ENCODE measurements at regions of chr9 and their contacts with region 1.

Region 1: GRCh38 chr9:19493174-19493811 is 84.5 kb downstream of the ACER2 start:
- DNase-seq: peak; percentile 61
- H3K4me3 Mint-ChIP-seq: peak overlapping the region; percentile 48
- H3K27ac Mint-ChIP-seq: no peak overlapping the region
- H3K4me1 Mint-ChIP-seq: peaks cover 17% of the 10 kb centered on the region
- H3K27me3 Mint-ChIP-seq: no peaks in the 10 kb centered on the region

Region 2: DNA sequence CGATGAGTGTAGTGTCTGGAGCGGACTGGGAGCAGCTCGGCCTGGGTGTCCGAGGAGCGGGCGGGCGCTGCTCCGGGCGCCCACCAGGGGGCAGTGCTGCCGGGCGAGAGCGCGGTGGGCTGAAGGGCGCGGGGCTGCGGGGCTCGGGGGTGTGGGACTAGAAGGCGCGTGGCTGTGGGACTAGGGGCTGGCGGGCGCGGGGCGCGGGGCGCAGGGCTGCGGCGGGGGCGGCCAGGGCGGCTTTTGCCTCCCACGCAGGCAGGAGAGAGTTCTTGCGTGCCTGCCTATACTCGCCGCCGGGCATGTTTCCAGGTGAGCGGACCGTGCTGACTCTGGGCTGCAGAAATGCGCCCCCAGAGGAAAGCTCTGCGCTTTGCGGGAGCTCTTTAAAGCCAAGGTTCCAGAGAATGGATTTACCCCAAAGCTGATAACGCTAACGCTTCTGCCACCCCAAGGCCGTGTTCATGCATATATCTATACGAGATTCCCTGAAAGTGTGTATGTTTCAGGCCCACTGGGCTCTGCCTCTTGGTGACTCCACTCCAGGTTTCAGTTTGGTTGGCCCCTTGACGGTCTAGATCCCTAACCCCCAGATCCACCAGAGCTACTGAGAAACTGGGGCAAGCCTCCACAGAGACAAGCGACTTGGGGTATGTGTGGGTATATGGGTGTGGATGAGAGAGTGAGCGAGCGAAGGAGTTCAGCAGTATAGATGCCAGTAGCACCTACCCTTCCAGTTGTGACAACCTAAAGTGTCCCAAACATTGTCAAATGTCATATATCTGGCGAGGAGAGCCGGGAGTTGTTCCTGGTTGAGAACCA is 28.3 kb before region 1 on chr9:
- CTCF ChIA-PET with region 1: interaction called, 33 read pairs
- POLR2A ChIA-PET with region 1: no interaction called
- intact Hi-C with region 1: no loop called
- DNase-seq: peak; percentile 73
- H3K4me3 Mint-ChIP-seq: peak overlapping the region; percentile 72
- H3K27ac Mint-ChIP-seq: no peak overlapping the region
- H3K4me1 Mint-ChIP-seq: peaks cover 7% of the 10 kb centered on the region
- H3K27me3 Mint-ChIP-seq: no peaks in the 10 kb centered on the region

Region 3: DNA sequence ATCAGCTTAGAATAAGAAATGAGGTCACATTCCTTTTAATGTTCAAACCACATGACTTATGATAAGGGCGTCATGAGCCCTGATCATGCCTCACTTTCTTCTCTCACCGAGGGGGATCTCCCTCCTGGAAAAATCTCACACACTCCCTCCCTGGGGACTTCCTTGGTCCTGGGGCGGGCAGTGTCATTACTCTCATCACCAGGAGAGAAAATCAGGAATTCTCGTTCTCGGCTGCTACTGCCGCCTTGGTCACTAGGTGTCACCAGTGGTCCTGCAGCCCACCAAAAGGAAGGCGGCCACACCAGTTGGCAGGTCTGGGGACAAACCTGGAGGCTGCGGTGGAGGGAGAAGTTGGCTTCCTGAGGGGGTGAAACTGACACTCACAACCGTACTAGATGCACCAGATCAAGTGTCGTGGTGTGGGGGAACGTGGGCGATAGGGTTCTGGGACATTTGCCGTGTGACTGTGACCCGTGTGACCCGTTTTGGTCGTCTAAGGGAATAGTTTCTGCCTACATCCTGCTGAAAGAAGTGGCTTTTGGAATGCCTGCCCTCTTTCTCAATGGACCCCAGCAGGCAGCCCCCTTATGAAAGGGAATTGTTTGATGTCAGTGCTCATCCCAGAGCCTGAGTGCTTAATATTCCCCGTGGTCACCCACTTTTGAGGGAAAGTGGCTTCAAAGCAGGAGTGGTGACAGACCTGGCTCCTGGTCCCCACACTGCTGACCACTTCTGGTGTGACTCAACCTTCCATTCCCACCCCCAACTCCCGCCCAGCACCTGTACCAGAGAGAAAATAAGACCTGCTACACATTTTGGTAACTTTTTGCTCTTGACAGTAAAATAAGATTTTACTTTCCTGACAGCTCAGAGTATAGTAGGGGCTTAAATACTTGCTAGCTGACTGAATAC is 21.3 kb before region 1 on chr9:
- CTCF ChIA-PET with region 1: interaction called, 3 read pairs
- POLR2A ChIA-PET with region 1: no interaction called
- intact Hi-C with region 1: loop called (anchors 1 kb)
- DNase-seq: peak; percentile 80
- H3K4me3 Mint-ChIP-seq: peak overlapping the region; percentile 42
- H3K27ac Mint-ChIP-seq: no peak overlapping the region
- H3K4me1 Mint-ChIP-seq: peaks cover 16% of the 10 kb centered on the region
- H3K27me3 Mint-ChIP-seq: peaks cover 6% of the 10 kb centered on the region

Region 4: GRCh38 chr9:19517202-19517942 is 24.1 kb after region 1 on chr9:
- CTCF ChIA-PET with region 1: no interaction called
- POLR2A ChIA-PET with region 1: no interaction called
- intact Hi-C with region 1: loop called (anchors 2 kb)
- DNase-seq: peak; percentile 31
- H3K4me3 Mint-ChIP-seq: no peak overlapping the region
- H3K27ac Mint-ChIP-seq: no peak overlapping the region
- H3K4me1 Mint-ChIP-seq: peaks cover 24% of the 10 kb centered on the region
- H3K27me3 Mint-ChIP-seq: peaks cover 15% of the 10 kb centered on the region

Region 5: DNA sequence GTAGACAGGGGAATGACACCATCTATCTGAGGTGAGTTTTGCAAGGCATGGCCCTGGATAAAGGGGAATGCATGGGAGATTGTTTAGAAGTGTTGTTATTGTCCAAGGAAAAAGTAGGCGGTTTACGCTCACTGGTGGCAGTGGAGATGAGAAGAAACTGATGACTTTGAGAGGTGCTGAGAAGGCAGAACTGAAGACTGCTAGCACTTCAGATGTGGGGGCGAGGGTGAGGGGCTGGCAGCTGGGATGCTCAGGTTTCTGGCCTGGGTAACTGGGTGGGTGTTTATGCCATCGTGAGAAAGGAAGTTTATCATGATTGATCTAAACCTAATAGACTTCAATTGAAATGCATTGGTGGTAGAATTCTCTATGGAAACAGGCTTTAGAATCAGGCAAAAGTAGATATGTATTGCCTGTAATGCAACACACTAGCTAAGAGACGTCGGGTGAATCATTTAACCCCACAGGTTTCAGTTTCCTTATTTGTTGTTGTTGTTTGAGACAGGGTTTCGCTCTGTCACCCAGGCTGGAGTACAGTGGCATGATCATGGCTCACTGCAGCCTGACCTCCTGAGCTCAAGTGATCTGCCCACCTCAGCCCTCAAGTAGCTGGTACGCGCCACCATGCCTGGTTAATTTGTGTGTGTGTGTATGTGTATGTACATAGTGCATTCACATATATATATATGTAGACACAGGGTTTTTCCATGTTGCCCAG is 172.0 kb after region 1 on chr9:
- CTCF ChIA-PET with region 1: no interaction called
- POLR2A ChIA-PET with region 1: no interaction called
- intact Hi-C with region 1: loop called (anchors 10 kb)
- DNase-seq: peak; percentile 44
- H3K4me3 Mint-ChIP-seq: no peak overlapping the region
- H3K27ac Mint-ChIP-seq: no peak overlapping the region
- H3K4me1 Mint-ChIP-seq: peaks cover 7% of the 10 kb centered on the region
- H3K27me3 Mint-ChIP-seq: peaks cover 16% of the 10 kb centered on the region

Measured in activated CD4-positive, alpha-beta memory T cell treated with anti-CD3 and anti-CD28 coated beads for 36 hours (primary cell).